Lower leg skin (tissue), 4 donors: ENCODE measurements at regions of chr16 and their contacts with region 1.

Region 1: GRCh38 chr16:87062569-87063442 is 254.4 kb downstream of the C16orf95 start:
- DNase-seq: peak in 1 of 2 donors; percentile 86
- H3K4me3 ChIP-seq: no peak overlapping the region
- CTCF ChIP-seq: no peak
- POLR2A ChIP-seq: no peak

Region 2: DNA sequence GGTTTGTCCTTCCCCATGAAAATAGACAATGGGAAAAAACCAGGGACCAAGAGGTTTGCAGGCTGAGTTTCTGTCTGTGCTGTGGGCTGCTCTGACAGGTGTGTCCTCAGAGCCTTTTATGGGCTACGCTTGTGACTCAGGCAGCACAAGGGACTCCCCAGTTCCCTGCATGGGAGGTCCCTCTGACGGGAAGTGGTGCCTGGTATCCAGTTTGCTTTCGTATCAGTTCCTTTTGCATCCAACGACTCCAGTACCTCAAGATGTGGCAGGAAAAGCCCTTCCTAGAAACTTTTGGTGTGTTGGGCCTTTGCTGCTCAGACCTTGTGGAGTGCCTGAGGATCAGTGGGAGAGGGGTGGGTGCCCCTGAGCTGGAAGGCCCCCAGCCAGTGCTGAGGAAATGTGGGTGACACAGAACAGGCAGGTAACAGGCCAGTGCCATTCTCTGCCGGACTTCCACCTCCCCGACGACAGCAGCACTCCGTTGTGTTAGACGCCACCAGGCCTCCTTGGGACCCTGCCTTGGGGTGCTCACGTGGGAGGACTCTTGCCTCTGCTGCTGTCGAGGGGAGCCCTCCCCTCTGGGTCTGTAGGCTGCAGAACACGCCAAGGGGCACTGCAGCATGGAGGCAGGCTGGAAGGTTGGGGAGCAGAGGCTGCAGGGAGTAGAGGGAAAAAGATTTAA is 1202.3 kb before region 1 on chr16:
- intact Hi-C with region 1: no loop called
- DNase-seq: peak in 1 of 2 donors; percentile 80
- H3K4me3 ChIP-seq: no peak overlapping the region
- CTCF ChIP-seq: no peak
- POLR2A ChIP-seq: no peak

Region 3: GRCh38 chr16:86566601-86566965 is 496.2 kb before region 1 on chr16 and contains the start of gene FOXC2:
- intact Hi-C with region 1: loop called (anchors 2 kb)
- DNase-seq: peak; percentile 63 to 95
- H3K4me3 ChIP-seq: no peak within 1 kb of the TSS
- CTCF ChIP-seq: no peak
- POLR2A ChIP-seq: no peak
- total RNA-seq, gene FOXC2: 0.16 to 0.32 (median 0.17) TPM in 3 of 4 donors, not detected in the other